CD8-positive, alpha-beta T cell (primary cell): ENCODE measurements at regions of chr11 and their contacts with region 1.

Region 1: GRCh38 chr11:62591448-62592145 is at the start of gene TUT1:
- DNase-seq: peak; percentile 92 to 100 (median 96)
- ATAC-seq: peak; percentile 87
- H3K4me3 ChIP-seq: peak within 1 kb of the TSS; percentile 72 to 79
- H3K4me3 Mint-ChIP-seq: peak within 1 kb of the TSS; percentile 95
- H3K27ac ChIP-seq: peak within 1 kb of the TSS; percentile 87 to 93
- H3K27ac Mint-ChIP-seq: peak within 1 kb of the TSS; percentile 98
- H3K4me1 ChIP-seq: peaks cover 32% of the 10 kb centered on the region
- H3K4me1 Mint-ChIP-seq: peaks cover 48% of the 10 kb centered on the region
- H3K27me3 ChIP-seq: no peaks in the 10 kb centered on the region
- H3K27me3 Mint-ChIP-seq: no peaks in the 10 kb centered on the region
- CTCF ChIP-seq: no peak
- total RNA-seq, gene TUT1: 15.3 to 17.7 TPM

Region 2: GRCh38 chr11:61949169-61950034 is 642.2 kb before region 1 on chr11:
- CTCF ChIA-PET with region 1: no interaction called
- POLR2A ChIA-PET with region 1: no interaction called
- intact Hi-C with region 1: no loop called
- DNase-seq: peak in 3 of 9 experiments; percentile 31 to 55 (median 45)
- ATAC-seq: peak; percentile 65
- H3K4me3 ChIP-seq: no peak overlapping the region
- H3K4me3 Mint-ChIP-seq: no peak overlapping the region
- H3K27ac ChIP-seq: no peak overlapping the region
- H3K27ac Mint-ChIP-seq: no peak overlapping the region
- H3K4me1 ChIP-seq: no peaks in the 10 kb centered on the region
- H3K4me1 Mint-ChIP-seq: no peaks in the 10 kb centered on the region
- H3K27me3 ChIP-seq: no peaks in the 10 kb centered on the region
- H3K27me3 Mint-ChIP-seq: peaks cover 19% of the 10 kb centered on the region
- CTCF ChIP-seq: no peak

Region 3: GRCh38 chr11:62612366-62613290 is 21.0 kb after region 1 on chr11 and contains the starts of genes EML3 and ROM1:
- CTCF ChIA-PET with region 1: interaction called, 71 read pairs
- POLR2A ChIA-PET with region 1: interaction called, 38 read pairs
- intact Hi-C with region 1: loop called (anchors 1 kb)
- DNase-seq: peak; percentile 79 to 95 (median 88)
- ATAC-seq: peak; percentile 72
- H3K4me3 ChIP-seq: peak within 1 kb of the TSS; percentile 67 to 97
- H3K4me3 Mint-ChIP-seq: peak within 1 kb of the TSS; percentile 95
- H3K27ac ChIP-seq: peak within 1 kb of the TSS; percentile 91
- H3K27ac Mint-ChIP-seq: peak within 1 kb of the TSS; percentile 99
- H3K4me1 ChIP-seq: peaks cover 38% of the 10 kb centered on the region
- H3K4me1 Mint-ChIP-seq: peaks cover 54% of the 10 kb centered on the region
- H3K27me3 ChIP-seq: no peaks in the 10 kb centered on the region
- H3K27me3 Mint-ChIP-seq: no peaks in the 10 kb centered on the region
- CTCF ChIP-seq: peak; percentile 99
- total RNA-seq, gene EML3: 167 to 189 TPM
- total RNA-seq, gene ROM1: 1.7 to 2.1 TPM

Region 4: DNA sequence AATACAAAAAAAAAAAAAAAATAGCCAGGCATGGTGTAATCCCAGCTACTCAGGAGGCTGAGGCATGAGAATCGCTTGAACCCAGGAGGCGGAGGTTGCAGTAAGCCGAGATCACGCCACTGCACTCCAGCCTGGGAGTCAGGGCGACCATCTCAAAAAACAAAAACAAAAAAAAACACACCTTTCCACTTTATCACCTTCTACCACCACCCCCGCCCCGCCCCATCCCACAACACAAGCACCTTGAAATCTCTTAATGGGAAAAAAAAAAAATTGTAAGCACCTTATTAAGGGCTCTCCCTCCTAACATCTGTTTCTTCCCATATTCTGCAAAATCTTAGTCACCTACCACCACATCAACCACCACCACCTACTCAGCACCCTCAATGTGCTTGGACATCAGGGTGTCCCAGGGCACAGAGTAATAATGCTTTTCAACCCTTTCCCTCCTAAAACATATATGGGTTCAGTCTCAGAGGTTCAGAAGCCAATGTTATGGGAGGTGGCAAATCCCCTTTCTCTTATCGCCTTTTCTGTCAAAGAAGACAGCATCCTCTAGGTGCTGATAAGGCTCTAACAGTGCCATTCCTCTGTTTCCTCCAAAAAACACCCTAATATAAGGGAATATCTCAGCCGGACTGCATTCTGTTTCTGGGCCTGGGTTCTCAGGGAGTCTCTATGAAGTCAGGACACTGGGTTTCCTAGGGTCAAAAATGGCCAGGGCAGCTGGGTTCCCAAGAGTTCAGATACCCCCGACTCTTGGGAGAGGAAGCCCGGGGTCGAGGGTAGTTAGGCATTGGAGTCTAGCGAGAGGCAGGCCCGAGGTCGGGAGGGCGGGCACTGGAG is 60.8 kb after region 1 on chr11:
- CTCF ChIA-PET with region 1: interaction called, 7 read pairs
- POLR2A ChIA-PET with region 1: interaction called, 35 read pairs
- intact Hi-C with region 1: loop called (anchors 1 kb)
- DNase-seq: peak in 3 of 9 experiments; percentile 26 to 50 (median 46)
- ATAC-seq: peak; percentile 10
- H3K4me3 ChIP-seq: peak overlapping the region; percentile 84 to 90
- H3K4me3 Mint-ChIP-seq: peak overlapping the region; percentile 91
- H3K27ac ChIP-seq: peak overlapping the region; percentile 81 to 91
- H3K27ac Mint-ChIP-seq: peak overlapping the region; percentile 94
- H3K4me1 ChIP-seq: peaks cover 14% of the 10 kb centered on the region
- H3K4me1 Mint-ChIP-seq: peaks cover 18% of the 10 kb centered on the region
- H3K27me3 ChIP-seq: no peaks in the 10 kb centered on the region
- H3K27me3 Mint-ChIP-seq: no peaks in the 10 kb centered on the region
- CTCF ChIP-seq: no peak

Region 5: GRCh38 chr11:62694455-62695167 is 103.0 kb after region 1 on chr11:
- CTCF ChIA-PET with region 1: interaction called, 48 read pairs
- POLR2A ChIA-PET with region 1: interaction called, 7 read pairs
- intact Hi-C with region 1: loop called (anchors 1 kb)
- DNase-seq: peak; percentile 57 to 88 (median 81)
- ATAC-seq: peak; percentile 91
- H3K4me3 ChIP-seq: no peak overlapping the region
- H3K4me3 Mint-ChIP-seq: no peak overlapping the region
- H3K27ac ChIP-seq: no peak overlapping the region
- H3K27ac Mint-ChIP-seq: no peak overlapping the region
- H3K4me1 ChIP-seq: peaks cover 6% of the 10 kb centered on the region
- H3K4me1 Mint-ChIP-seq: peaks cover 3% of the 10 kb centered on the region
- H3K27me3 ChIP-seq: no peaks in the 10 kb centered on the region
- H3K27me3 Mint-ChIP-seq: no peaks in the 10 kb centered on the region
- CTCF ChIP-seq: peak; percentile 79

Region 6: DNA sequence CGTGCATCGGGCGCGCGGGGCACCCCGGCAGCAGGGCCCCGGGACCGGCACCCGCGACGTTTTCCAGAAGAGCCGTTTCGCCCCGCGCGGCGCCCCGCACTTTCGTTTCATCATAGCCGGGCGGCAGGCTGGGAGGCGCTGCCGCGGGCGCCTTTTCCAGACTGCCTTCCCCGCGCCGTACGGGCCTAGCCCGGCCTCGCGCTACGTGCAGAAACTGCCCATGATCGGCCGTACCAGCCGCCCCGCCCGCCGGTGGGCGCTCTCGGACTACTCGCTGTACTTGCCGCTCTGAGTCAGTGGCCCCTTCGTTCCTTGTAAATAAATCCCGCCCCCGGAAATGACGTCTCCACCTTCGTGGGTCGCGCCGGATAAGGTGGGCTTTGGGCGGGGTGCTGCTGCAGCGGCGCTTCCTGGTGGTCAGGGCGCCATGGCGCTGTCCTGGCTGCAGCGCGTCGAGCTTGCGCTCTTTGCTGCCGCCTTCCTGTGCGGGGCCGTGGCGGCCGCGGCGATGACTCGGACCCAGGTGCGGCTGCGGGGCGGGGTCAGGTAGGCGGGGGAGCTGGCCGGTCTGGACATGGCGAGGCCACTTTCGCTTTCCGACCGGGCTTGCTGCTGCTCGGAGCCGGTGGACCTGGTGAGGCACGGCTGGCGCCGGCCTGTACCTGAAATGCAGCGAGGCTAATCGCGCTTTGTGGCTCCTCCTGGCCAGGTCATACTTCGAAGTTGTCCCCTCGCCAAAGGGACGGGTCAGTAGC is 195.6 kb after region 1 on chr11 and contains the start of gene TMEM179B:
- CTCF ChIA-PET with region 1: no interaction called
- POLR2A ChIA-PET with region 1: interaction called, 8 read pairs
- intact Hi-C with region 1: loop called (anchors 1 to 10 kb)
- DNase-seq: peak; percentile 94 to 100 (median 99)
- ATAC-seq: peak; percentile 68
- H3K4me3 ChIP-seq: peak within 1 kb of the TSS; percentile 94 to 96
- H3K4me3 Mint-ChIP-seq: peak within 1 kb of the TSS; percentile 94
- H3K27ac ChIP-seq: peak within 1 kb of the TSS; percentile 89 to 91
- H3K27ac Mint-ChIP-seq: peak within 1 kb of the TSS; percentile 95
- H3K4me1 ChIP-seq: peaks cover 42% of the 10 kb centered on the region
- H3K4me1 Mint-ChIP-seq: peaks cover 41% of the 10 kb centered on the region
- H3K27me3 ChIP-seq: no peaks in the 10 kb centered on the region
- H3K27me3 Mint-ChIP-seq: no peaks in the 10 kb centered on the region
- CTCF ChIP-seq: peak; percentile 34
- total RNA-seq, gene TMEM179B: 27.5 to 28.4 TPM